IMR-90 (cell line): ENCODE measurements at regions of chr17 and their contacts with region 1.

Region 1: GRCh38 chr17:61389670-61390478 is 9.8 kb upstream of the TBX2 start:
- DNase-seq: peak; percentile 41
- ATAC-seq: peak; percentile 72
- H3K4me3 ChIP-seq: no peak overlapping the region
- H3K27ac ChIP-seq: peak overlapping the region; percentile 9; the same call in 1 of the 2 replicates
- H3K4me1 ChIP-seq: peaks cover 19% of the 10 kb centered on the region
- H3K27me3 ChIP-seq: no peaks in the 10 kb centered on the region
- CTCF ChIP-seq: peak; percentile 85
- POLR2A ChIP-seq: no peak
- RAD21 ChIP-seq: peak; percentile 89

Region 2: DNA sequence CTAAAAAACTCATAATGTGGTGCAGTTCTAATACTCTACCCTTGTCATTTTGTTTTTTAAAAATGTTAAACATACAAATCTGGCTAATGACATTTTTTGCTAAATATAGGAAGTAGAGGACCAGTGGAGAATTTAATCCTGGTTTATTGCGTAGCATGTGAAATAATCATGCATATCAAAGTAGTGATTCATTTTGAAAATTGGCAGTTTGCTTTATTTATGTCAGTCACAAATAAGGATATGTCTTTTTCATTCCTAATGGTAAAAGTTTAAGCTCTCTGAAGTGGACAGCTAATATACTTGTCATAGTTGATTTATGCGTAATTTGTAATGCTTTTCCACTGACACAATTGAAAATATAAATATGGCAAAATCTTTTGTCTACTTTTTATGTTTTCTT is 488.1 kb before region 1 on chr17:
- CTCF ChIA-PET with region 1: no interaction called
- POLR2A ChIA-PET with region 1: no interaction called
- dilution Hi-C with region 1: no loop called
- in situ Hi-C with region 1: no loop called
- intact Hi-C with region 1: loop called (anchors 10 kb)
- DNase-seq: peak; percentile 81
- ATAC-seq: peak; percentile 56
- H3K4me3 ChIP-seq: no peak overlapping the region
- H3K27ac ChIP-seq: no peak overlapping the region
- H3K4me1 ChIP-seq: peaks cover 2% of the 10 kb centered on the region; the same call in 1 of the 2 replicates
- H3K27me3 ChIP-seq: no peaks in the 10 kb centered on the region
- CTCF ChIP-seq: no peak
- POLR2A ChIP-seq: no peak
- RAD21 ChIP-seq: no peak

Region 3: GRCh38 chr17:60971515-60972369 is 418.1 kb before region 1 on chr17:
- CTCF ChIA-PET with region 1: no interaction called
- POLR2A ChIA-PET with region 1: no interaction called
- dilution Hi-C with region 1: no loop called
- in situ Hi-C with region 1: no loop called
- intact Hi-C with region 1: loop called (anchors 2 kb)
- DNase-seq: peak; percentile 80
- ATAC-seq: peak; percentile 99
- H3K4me3 ChIP-seq: no peak overlapping the region
- H3K27ac ChIP-seq: no peak overlapping the region
- H3K4me1 ChIP-seq: no peaks in the 10 kb centered on the region
- H3K27me3 ChIP-seq: no peaks in the 10 kb centered on the region
- CTCF ChIP-seq: peak; percentile 86
- POLR2A ChIP-seq: no peak
- RAD21 ChIP-seq: peak; percentile 90

Region 4: GRCh38 chr17:61002316-61002736 is 387.5 kb before region 1 on chr17:
- CTCF ChIA-PET with region 1: interaction called, 10 read pairs
- POLR2A ChIA-PET with region 1: no interaction called
- dilution Hi-C with region 1: no loop called
- in situ Hi-C with region 1: loop called (anchors 5 kb)
- intact Hi-C with region 1: loop called (anchors 2 kb)
- DNase-seq: peak; percentile 79
- ATAC-seq: peak; percentile 75
- H3K4me3 ChIP-seq: no peak overlapping the region
- H3K27ac ChIP-seq: no peak overlapping the region
- H3K4me1 ChIP-seq: no peaks in the 10 kb centered on the region
- H3K27me3 ChIP-seq: no peaks in the 10 kb centered on the region
- CTCF ChIP-seq: peak; percentile 71
- POLR2A ChIP-seq: no peak
- RAD21 ChIP-seq: peak; percentile 84

Region 5: GRCh38 chr17:61201232-61201640 is 188.6 kb before region 1 on chr17:
- CTCF ChIA-PET with region 1: no interaction called
- POLR2A ChIA-PET with region 1: no interaction called
- dilution Hi-C with region 1: no loop called
- in situ Hi-C with region 1: loop called (anchors 5 kb)
- intact Hi-C with region 1: no loop called
- DNase-seq: peak; percentile 99
- ATAC-seq: peak; percentile 84
- H3K4me3 ChIP-seq: peak overlapping the region; percentile 17; the same call in 1 of the 2 replicates
- H3K27ac ChIP-seq: peak overlapping the region; percentile 84
- H3K4me1 ChIP-seq: peaks cover 14% of the 10 kb centered on the region
- H3K27me3 ChIP-seq: no peaks in the 10 kb centered on the region
- CTCF ChIP-seq: no peak
- POLR2A ChIP-seq: no peak
- RAD21 ChIP-seq: peak; percentile 21; the same call in 1 of the 2 replicates

Region 6: GRCh38 chr17:61307905-61308886 is 81.7 kb before region 1 on chr17:
- CTCF ChIA-PET with region 1: no interaction called
- POLR2A ChIA-PET with region 1: interaction called, 7 read pairs
- dilution Hi-C with region 1: no loop called
- in situ Hi-C with region 1: loop called (anchors 5 kb)
- intact Hi-C with region 1: loop called (anchors 2 kb)
- DNase-seq: peak; percentile 99
- ATAC-seq: peak; percentile 87
- H3K4me3 ChIP-seq: no peak overlapping the region
- H3K27ac ChIP-seq: peak overlapping the region; percentile 99
- H3K4me1 ChIP-seq: peaks cover 35% of the 10 kb centered on the region
- H3K27me3 ChIP-seq: no peaks in the 10 kb centered on the region
- CTCF ChIP-seq: peak; percentile 10; the same call in 1 of the 2 replicates
- POLR2A ChIP-seq: no peak
- RAD21 ChIP-seq: peak; percentile 31; the same call in 1 of the 2 replicates

Region 7: GRCh38 chr17:61314368-61315078 is 75.4 kb before region 1 on chr17:
- CTCF ChIA-PET with region 1: no interaction called
- POLR2A ChIA-PET with region 1: no interaction called
- dilution Hi-C with region 1: no loop called
- in situ Hi-C with region 1: loop called (anchors 5 kb)
- intact Hi-C with region 1: loop called (anchors 2 kb)
- DNase-seq: peak; percentile 60
- ATAC-seq: peak; percentile 35
- H3K4me3 ChIP-seq: no peak overlapping the region
- H3K27ac ChIP-seq: peak overlapping the region; percentile 39
- H3K4me1 ChIP-seq: peaks cover 18% of the 10 kb centered on the region
- H3K27me3 ChIP-seq: no peaks in the 10 kb centered on the region
- CTCF ChIP-seq: peak; percentile 29; the same call in 1 of the 2 replicates
- POLR2A ChIP-seq: no peak
- RAD21 ChIP-seq: peak; percentile 33